Right cardiac atrium (tissue), 5 donors: ENCODE measurements at regions of chr5 and their contacts with region 1.

Region 1: DNA sequence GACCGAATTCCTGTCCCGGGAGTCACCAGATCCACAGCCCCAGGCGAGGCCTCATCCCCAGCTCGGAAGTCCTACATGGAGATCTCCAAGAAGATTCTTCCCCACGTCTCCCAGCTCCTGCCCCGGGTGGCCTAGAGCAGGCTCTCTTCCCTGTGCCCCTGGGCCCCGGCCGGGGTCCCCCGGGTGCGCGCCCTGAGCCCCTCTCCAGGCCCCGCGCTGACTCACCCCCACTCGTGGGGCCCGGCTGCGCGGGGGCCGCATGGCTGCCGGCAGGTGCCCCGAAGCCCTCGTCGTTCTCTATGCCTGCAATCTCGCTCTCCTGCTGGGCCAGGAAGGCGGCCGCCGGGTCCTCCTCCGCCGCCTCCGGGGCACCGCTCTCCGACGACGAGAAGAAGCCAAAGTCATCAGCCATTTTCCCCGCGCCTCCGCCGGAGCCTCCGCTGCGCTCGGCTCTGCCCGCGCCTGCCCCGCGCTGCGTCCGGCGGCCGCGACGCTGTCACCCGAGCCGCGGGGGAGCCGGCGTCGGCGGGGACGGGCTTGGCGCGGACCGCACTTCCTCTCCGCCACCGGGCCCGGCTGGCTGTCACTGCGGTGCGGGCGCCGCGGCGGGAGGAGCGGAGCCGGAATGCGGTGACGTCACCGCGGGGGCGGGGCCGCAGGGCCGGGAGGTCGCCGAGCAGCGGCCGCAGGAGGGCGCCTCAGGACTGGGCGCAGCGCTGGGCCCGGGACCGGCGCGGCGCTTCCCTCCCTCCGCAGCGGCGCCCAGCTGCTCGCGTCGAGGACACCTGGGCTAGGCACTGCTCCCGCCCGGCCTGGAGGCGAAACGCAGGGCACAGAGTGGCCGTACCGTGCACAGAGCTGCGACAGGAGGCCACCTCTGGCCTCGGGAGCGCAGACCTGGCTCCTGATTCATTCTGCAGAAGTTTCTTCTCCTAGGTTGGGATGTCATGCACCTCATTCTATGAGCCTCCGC is at the start of gene CLTB:
- DNase-seq: peak; percentile 91 to 97 (median 97)
- ATAC-seq: peak; percentile 94 to 96
- H3K4me3 ChIP-seq: peak within 1 kb of the TSS; percentile 93
- H3K27ac ChIP-seq: peak within 1 kb of the TSS; percentile 82
- H3K4me1 ChIP-seq: peaks cover 11% of the 10 kb centered on the region
- H3K27me3 ChIP-seq: no peaks in the 10 kb centered on the region
- total RNA-seq, gene CLTB: 209 to 219 (median 212) TPM

Region 2: GRCh38 chr5:176447982-176448608 is 31.9 kb after region 1 on chr5 and contains the start of gene FAF2:
- intact Hi-C with region 1: loop called in 1 of 4 experiments (anchors 2 kb)
- DNase-seq: peak; percentile 95 to 99 (median 98)
- ATAC-seq: peak; percentile 99
- H3K4me3 ChIP-seq: peak within 1 kb of the TSS; percentile 93
- H3K27ac ChIP-seq: peak within 1 kb of the TSS; percentile 98
- H3K4me1 ChIP-seq: peaks cover 2% of the 10 kb centered on the region
- H3K27me3 ChIP-seq: no peaks in the 10 kb centered on the region
- total RNA-seq, gene FAF2: 17.6 to 25.2 (median 18.8) TPM

Region 3: DNA sequence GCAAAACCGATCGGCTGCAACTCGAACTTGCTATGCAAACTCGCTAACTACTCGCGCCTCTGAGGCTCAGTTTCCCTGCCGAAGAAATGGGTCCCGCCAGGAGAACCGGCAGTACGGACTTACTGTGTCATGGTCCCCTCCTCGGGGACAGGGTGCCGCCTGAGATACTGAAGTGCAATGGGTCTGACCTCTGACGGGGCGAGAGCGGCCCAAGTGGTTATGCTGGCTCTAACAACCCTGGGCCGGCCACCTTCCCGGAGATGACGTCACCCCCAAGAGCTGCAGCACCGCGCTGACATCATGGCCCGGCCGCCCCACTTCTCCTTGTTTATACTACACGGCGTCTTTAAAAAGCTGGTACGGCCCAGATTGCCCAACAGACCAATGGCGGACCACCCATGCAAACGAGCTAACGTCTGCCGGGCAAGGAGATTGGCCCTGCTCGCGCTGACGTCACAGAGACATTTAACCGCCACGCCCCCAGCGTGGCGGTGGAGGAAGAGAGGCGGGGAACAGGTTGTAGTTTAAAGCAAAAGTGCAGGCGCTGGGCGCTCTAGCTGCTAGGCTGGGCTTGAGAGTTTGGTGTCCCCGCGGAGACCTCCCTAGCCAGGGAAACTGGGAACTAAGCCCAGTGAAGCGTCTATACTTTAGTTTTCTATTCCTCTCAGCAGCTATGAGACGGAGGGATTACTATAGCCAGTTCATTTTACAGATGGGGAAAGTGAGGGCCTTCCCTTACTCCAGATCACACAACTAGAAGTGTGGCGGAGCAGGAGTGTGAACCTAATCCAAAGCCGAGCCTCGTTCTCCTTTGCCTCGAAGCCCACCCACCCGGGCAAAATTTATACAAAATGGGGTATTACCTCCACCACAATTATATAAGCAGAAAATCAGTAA is 121.6 kb after region 1 on chr5:
- intact Hi-C with region 1: loop called in 1 of 4 experiments (anchors 10 kb)
- DNase-seq: peak; percentile 99
- ATAC-seq: peak; percentile 92
- H3K4me3 ChIP-seq: peak overlapping the region; percentile 97
- H3K27ac ChIP-seq: peak overlapping the region; percentile 97
- H3K4me1 ChIP-seq: peaks cover 20% of the 10 kb centered on the region
- H3K27me3 ChIP-seq: no peaks in the 10 kb centered on the region